ENCODE measurements at regions of chr14 and their contacts with region 1.

Region 1: DNA sequence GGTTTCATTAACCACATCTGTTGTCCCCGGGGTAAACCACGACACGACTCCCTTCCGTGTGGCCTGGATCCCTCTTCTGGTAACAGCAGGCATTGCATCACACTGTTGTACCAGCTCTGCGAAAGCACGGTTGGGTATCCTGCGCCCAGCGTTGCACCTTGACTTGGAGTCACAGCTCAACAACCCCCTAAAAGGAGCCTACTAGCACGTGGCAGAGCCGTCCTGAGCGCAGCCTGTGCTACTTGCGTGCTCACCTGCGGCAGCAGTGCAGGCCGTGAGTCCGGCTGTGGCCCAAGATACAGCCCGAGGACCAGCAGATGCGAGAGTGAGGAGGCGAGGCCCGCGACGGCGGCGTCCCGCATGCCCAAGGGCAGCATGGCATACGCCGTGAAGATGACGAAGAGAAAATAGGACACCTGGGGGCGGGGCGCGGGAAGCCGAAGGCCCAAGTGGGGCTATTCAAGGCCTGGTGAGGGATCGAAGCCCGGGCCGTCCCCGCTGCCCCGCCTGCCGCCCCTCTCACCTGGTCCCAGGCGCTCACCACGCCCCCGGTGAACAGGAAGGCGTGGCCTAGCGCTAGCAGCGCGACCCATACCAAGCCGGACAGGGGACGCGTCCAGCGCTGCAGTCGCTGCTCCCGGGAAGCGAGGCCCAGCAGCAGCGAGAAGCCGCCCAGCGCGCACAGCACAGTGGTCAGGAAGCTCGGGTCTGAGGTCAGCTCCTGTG is 2.4 kb downstream of the ADCY4 start:
- DNase-seq: peak; percentile 89
- H3K4me3 Mint-ChIP-seq: peak overlapping the region; percentile 78
- H3K27ac Mint-ChIP-seq: peak overlapping the region; percentile 30
- H3K4me1 Mint-ChIP-seq: peaks cover 46% of the 10 kb centered on the region
- H3K27me3 Mint-ChIP-seq: peaks cover 21% of the 10 kb centered on the region

Region 2: DNA sequence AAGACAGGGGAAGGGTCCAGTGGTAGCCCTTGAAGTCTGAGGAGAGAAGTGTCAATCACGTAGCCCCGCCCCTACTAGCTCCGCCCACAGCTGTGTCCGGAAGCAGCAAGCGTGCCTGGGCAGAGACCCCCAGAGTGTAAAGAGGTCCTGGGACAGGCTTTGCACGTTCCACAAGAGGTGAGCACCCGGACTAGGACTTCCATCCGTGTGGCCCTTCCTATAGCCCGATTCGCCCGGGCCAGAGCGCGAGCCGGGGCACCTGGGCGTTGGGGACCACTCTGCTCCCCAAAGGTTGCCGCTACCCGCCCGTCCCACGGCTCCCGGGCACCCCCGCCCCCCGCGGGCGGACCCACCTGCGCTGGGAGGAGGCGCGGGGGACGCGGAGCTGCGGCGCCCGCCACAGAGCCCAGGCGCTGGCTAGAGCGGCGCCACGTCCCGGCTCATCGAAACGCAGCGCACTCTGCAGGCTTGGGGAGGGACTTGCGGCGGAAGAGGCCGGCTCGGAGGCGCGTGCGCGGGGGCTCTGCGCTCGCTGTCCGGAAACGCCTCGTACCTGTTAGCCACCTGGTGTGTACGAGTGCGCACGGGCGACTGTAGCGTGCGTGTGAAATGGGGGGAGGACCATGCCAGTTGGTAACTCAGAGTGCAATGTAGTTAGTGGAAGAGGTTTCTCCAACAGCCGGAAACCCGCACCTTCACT is 61.1 kb before region 1 on chr14 and contains the start of gene RABGGTA:
- CTCF ChIA-PET with region 1: interaction called, 14 read pairs
- POLR2A ChIA-PET with region 1: no interaction called
- intact Hi-C with region 1: loop called (anchors 2 kb)
- DNase-seq: peak; percentile 93
- H3K4me3 Mint-ChIP-seq: peak within 1 kb of the TSS; percentile 84
- H3K27ac Mint-ChIP-seq: peak within 1 kb of the TSS; percentile 94
- H3K4me1 Mint-ChIP-seq: peaks cover 42% of the 10 kb centered on the region
- H3K27me3 Mint-ChIP-seq: no peaks in the 10 kb centered on the region
- total RNA-seq, gene RABGGTA: 39.5 to 40.6 TPM

Region 3: DNA sequence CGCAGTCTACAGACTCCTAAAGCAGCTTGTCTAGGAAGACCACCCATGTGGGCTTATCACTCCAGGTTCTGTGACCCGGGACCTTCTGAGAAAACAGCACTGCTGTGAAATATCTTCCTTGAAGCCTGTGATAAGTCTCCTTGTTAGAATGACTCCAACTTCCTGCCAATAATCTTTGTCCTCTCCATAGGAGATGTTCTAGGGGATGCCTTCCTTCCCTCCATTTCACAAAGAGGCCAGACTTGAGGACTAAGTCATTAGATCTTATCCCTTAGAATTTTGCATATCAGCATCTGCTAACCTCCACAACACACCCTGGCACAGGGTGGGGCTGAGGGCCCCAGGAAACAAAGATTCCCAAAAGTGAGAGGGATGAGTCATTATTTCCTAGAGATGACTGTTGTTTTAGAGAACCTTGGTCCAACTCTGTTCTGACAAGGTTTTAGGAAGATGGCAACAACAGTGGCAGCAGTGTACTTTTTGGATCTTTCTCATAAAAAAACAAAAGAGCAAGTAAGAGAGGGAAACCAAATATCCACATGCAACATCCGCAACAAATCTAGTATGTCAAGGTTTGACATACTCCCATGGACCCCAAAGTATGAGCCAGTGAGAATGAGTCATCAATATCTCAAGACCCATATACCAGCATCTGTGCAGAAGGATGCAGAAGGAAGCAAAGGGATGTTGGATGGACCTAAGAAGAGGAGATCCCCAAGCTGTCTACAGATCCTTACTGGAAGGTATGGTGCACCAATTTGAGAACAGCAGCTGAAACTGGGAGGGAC is 15.1 kb before region 1 on chr14:
- CTCF ChIA-PET with region 1: interaction called, 235 read pairs
- POLR2A ChIA-PET with region 1: interaction called, 3 read pairs
- intact Hi-C with region 1: no loop called
- DNase-seq: no peak
- H3K4me3 Mint-ChIP-seq: no peak overlapping the region
- H3K27ac Mint-ChIP-seq: peak overlapping the region; percentile 55
- H3K4me1 Mint-ChIP-seq: peaks cover 45% of the 10 kb centered on the region
- H3K27me3 Mint-ChIP-seq: no peaks in the 10 kb centered on the region

Region 4: GRCh38 chr14:24366721-24367513 is 34.5 kb after region 1 on chr14:
- CTCF ChIA-PET with region 1: interaction called, 31 read pairs
- POLR2A ChIA-PET with region 1: no interaction called
- intact Hi-C with region 1: loop called (anchors 5 kb)
- DNase-seq: peak; percentile 34
- H3K4me3 Mint-ChIP-seq: peak overlapping the region; percentile 55
- H3K27ac Mint-ChIP-seq: no peak overlapping the region
- H3K4me1 Mint-ChIP-seq: peaks cover 24% of the 10 kb centered on the region
- H3K27me3 Mint-ChIP-seq: peaks cover 39% of the 10 kb centered on the region

Region 5: DNA sequence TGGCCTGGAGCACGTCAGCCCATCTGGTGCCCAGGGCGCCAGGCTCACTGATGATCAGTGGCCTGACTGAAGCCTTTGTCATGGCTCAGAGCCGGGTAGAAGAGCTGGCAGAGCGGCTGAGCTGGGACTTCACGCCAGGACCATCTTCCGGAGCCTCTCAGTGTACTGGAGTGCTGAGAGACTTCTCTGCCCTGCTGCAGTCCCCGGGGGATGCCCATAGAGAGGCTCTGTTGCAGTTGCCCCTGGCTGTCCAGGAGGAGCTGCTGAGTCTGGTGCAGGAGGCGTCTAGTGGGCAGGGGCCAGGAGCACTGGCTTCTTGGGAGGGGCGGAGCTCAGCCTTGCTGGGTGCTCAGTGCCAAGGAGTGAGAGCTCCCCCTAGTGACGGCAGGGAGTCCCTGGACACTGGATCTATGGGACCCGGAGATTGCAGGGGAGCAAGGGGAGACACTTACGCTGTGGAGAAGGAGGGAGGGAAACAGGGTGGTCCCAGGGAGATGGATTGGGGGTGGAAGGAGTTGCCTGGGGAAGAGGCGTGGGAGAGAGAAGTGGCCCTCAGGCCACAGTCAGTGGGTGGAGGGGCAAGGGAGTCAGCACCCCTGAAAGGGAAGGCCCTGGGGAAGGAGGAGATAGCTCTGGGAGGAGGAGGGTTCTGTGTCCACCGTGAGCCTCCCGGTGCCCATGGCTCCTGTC is 99.3 kb after region 1 on chr14:
- CTCF ChIA-PET with region 1: interaction called, 968 read pairs
- POLR2A ChIA-PET with region 1: interaction called, 67 read pairs
- intact Hi-C with region 1: loop called (anchors 1 kb)
- DNase-seq: peak; percentile 94
- H3K4me3 Mint-ChIP-seq: peak overlapping the region; percentile 91
- H3K27ac Mint-ChIP-seq: peak overlapping the region; percentile 98
- H3K4me1 Mint-ChIP-seq: peaks cover 41% of the 10 kb centered on the region
- H3K27me3 Mint-ChIP-seq: no peaks in the 10 kb centered on the region

Region 6: GRCh38 chr14:24741871-24742270 is 409.4 kb after region 1 on chr14:
- CTCF ChIA-PET with region 1: no interaction called
- POLR2A ChIA-PET with region 1: no interaction called
- intact Hi-C with region 1: no loop called
- DNase-seq: no peak
- H3K4me3 Mint-ChIP-seq: no peak overlapping the region
- H3K27ac Mint-ChIP-seq: no peak overlapping the region
- H3K4me1 Mint-ChIP-seq: no peaks in the 10 kb centered on the region
- H3K27me3 Mint-ChIP-seq: peaks cover 4% of the 10 kb centered on the region